ENCODE measurements at regions of chr1 and their contacts with region 1.

Region 1: DNA sequence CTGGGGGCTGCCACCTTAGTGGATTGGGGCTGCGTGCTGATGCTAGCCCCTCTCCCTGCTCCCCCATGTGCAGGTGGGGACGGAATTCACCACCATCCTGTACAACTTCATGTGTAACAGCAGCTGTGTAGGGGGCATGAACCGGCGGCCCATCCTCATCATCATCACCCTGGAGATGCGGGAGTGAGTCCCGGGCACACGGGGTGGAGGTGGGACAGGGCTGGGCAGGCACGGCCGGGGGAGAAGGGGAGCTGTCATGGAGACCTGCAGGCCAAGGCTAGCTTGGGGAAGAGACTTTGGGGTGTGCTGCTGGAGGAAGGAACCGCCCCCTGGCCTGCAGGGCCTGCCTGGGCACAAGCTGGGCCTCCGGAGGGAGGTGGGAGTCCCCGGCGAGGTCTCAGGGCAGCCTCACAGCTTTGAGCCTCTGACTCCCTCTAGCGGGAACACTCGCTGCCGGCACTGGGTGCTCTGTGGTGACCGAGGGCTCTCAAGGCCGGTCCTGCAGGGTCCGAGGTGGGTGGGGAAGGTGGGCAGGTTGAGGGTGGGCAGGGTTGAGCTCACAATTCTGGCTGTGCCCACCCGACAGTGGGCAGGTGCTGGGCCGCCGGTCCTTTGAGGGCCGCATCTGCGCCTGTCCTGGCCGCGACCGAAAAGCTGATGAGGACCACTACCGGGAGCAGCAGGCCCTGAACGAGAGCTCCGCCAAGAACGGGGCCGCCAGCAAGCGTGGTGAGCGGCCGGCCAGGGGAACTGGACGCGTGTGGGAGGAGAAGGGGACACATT is 25.0 kb upstream of the CCDC27 start:
- DNase-seq: peak; percentile 66
- H3K4me3 Mint-ChIP-seq: no peak overlapping the region
- H3K27ac Mint-ChIP-seq: no peak overlapping the region
- H3K4me1 Mint-ChIP-seq: no peaks in the 10 kb centered on the region
- H3K27me3 Mint-ChIP-seq: no peaks in the 10 kb centered on the region

Region 2: GRCh38 chr1:2240270-2241156 is 1486.7 kb before region 1 on chr1:
- intact Hi-C with region 1: no loop called
- DNase-seq: no peak
- H3K4me3 Mint-ChIP-seq: peak overlapping the region; percentile 40
- H3K27ac Mint-ChIP-seq: peak overlapping the region; percentile 74
- H3K4me1 Mint-ChIP-seq: peaks cover 52% of the 10 kb centered on the region
- H3K27me3 Mint-ChIP-seq: no peaks in the 10 kb centered on the region

Region 3: GRCh38 chr1:3491291-3492246 is 235.7 kb before region 1 on chr1:
- intact Hi-C with region 1: loop called (anchors 2 kb)
- DNase-seq: peak; percentile 95
- H3K4me3 Mint-ChIP-seq: no peak overlapping the region
- H3K27ac Mint-ChIP-seq: no peak overlapping the region
- H3K4me1 Mint-ChIP-seq: peaks cover 2% of the 10 kb centered on the region
- H3K27me3 Mint-ChIP-seq: no peaks in the 10 kb centered on the region

Region 4: GRCh38 chr1:3649342-3650247 is 77.6 kb before region 1 on chr1 and contains the start of gene WRAP73:
- intact Hi-C with region 1: loop called (anchors 10 kb)
- DNase-seq: peak; percentile 97
- H3K4me3 Mint-ChIP-seq: peak within 1 kb of the TSS; percentile 80
- H3K27ac Mint-ChIP-seq: peak within 1 kb of the TSS; percentile 53
- H3K4me1 Mint-ChIP-seq: peaks cover 20% of the 10 kb centered on the region
- H3K27me3 Mint-ChIP-seq: peaks cover 26% of the 10 kb centered on the region
- total RNA-seq, gene WRAP73: 41.3 and 44.7 TPM in 2 replicates

Region 5: GRCh38 chr1:3796215-3797061 is 69.2 kb after region 1 on chr1 and contains the start of gene LRRC47:
- intact Hi-C with region 1: no loop called
- DNase-seq: peak; percentile 99
- H3K4me3 Mint-ChIP-seq: peak within 1 kb of the TSS; percentile 88
- H3K27ac Mint-ChIP-seq: peak within 1 kb of the TSS; percentile 90
- H3K4me1 Mint-ChIP-seq: peaks cover 31% of the 10 kb centered on the region
- H3K27me3 Mint-ChIP-seq: peaks cover 10% of the 10 kb centered on the region
- total RNA-seq, gene LRRC47: 40.8 and 46.0 TPM in 2 replicates